T-cell (primary cell): ENCODE measurements at regions of chr4 and their contacts with region 1.

Region 1: GRCh38 chr4:6463311-6464289 is 8.8 kb downstream of the PPP2R2C start:
- DNase-seq: no peak
- ATAC-seq: peak in 1 of 4 experiments; percentile 23
- H3K4me3 ChIP-seq: no peak overlapping the region
- H3K4me3 Mint-ChIP-seq: no peak overlapping the region
- H3K27ac ChIP-seq: no peak overlapping the region
- H3K27ac Mint-ChIP-seq: no peak overlapping the region
- H3K4me1 ChIP-seq: no peaks in the 10 kb centered on the region
- H3K4me1 Mint-ChIP-seq: no peaks in the 10 kb centered on the region
- H3K27me3 ChIP-seq: peaks cover 0 to 29% of the 10 kb centered on the region in 2 experiments
- H3K27me3 Mint-ChIP-seq: peaks cover 31 to 52% of the 10 kb centered on the region in 2 donors

Region 2: GRCh38 chr4:6591313-6591712 is 127.7 kb after region 1 on chr4:
- CTCF ChIA-PET with region 1: no interaction called
- POLR2A ChIA-PET with region 1: interaction called in 1 of 2 experiments, 12 read pairs
- DNase-seq: no peak
- ATAC-seq: no peak
- H3K4me3 ChIP-seq: no peak overlapping the region
- H3K4me3 Mint-ChIP-seq: no peak overlapping the region
- H3K27ac ChIP-seq: no peak overlapping the region
- H3K27ac Mint-ChIP-seq: no peak overlapping the region
- H3K4me1 ChIP-seq: no peaks in the 10 kb centered on the region
- H3K4me1 Mint-ChIP-seq: peaks cover 0 to 5% (median 0%) of the 10 kb centered on the region in 3 donors
- H3K27me3 ChIP-seq: no peaks in the 10 kb centered on the region
- H3K27me3 Mint-ChIP-seq: no peaks in the 10 kb centered on the region

Region 3: DNA sequence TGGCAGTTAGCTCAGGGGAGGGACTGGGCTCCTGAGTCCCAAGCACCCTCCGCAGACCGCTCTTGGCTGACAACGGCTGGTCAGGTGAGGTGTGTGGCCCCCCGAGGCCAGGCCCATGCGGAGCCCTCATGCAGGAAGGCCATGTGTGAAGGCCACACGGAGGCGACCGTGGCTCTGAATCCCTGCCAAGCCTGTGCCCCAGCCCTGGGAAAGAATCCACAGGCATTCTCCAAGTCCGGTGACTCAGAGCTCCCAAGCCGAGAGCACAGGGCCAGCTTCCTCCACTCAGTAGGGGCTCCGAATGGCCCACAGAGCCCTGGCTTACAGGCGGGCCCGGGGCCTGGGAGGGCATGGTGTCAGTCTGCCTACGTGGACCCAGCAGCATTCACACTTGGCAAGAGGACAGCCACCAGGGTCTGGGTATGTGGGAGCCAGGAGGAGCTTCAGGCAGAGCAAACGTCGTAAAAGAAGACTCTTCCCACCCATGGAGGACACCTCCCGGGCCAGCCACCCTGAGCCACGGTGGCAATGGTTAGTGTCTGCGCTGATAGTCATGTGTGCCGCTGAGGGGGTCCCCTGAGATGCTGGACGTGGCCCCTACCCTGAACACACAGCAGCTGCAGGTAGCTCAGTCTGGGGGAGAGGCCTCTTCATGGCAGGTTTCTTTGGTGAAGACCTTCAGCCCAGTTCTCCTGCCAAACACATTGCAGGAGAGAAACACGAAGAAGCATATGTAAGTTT is 865.5 kb after region 1 on chr4:
- CTCF ChIA-PET with region 1: no interaction called
- POLR2A ChIA-PET with region 1: no interaction called
- DNase-seq: no peak
- ATAC-seq: no peak
- H3K4me3 ChIP-seq: no peak overlapping the region
- H3K4me3 Mint-ChIP-seq: no peak overlapping the region
- H3K27ac ChIP-seq: no peak overlapping the region
- H3K27ac Mint-ChIP-seq: no peak overlapping the region
- H3K4me1 ChIP-seq: peaks cover 0 to 29% of the 10 kb centered on the region in 2 experiments
- H3K4me1 Mint-ChIP-seq: peaks cover 0 to 3% (median 2%) of the 10 kb centered on the region in 3 donors
- H3K27me3 ChIP-seq: peaks cover 0 to 44% of the 10 kb centered on the region in 2 experiments
- H3K27me3 Mint-ChIP-seq: peaks cover 0 to 12% of the 10 kb centered on the region in 2 donors